Psoas muscle (tissue), 8 donors: ENCODE measurements at regions of chr2 and their contacts with region 1.

Region 1: GRCh38 chr2:163345908-163346573 is 389.8 kb downstream of the FIGN start:
- DNase-seq: no peak
- ATAC-seq: peak in 1 of 4 donors; percentile 34
- H3K4me3 ChIP-seq: no peak overlapping the region
- H3K27ac ChIP-seq: no peak overlapping the region
- H3K4me1 ChIP-seq: peaks cover 2% of the 10 kb centered on the region
- H3K27me3 ChIP-seq: no peaks in the 10 kb centered on the region
- CTCF ChIP-seq: peak; percentile 83

Region 2: DNA sequence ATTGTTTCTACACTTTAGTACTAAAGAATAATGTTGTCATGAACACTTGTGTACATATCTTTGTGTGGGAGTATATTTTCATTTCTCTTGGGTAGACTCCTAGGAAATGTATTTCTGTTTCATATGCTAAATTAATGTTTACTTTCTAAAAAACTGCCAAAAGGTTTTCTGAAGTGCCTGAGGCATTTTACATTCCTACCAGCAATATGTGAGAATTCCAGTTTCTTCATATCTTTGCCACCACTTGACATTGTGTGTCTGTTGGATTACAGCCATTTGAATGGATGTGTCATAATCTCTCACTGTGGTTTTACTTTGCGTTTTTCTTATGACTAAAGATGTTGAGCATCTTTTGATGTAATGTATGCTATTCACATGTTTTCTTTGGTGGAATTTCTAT is 79.3 kb before region 1 on chr2:
- intact Hi-C with region 1: no loop called
- DNase-seq: no peak
- ATAC-seq: no peak
- H3K4me3 ChIP-seq: no peak overlapping the region
- H3K27ac ChIP-seq: no peak overlapping the region
- H3K4me1 ChIP-seq: no peaks in the 10 kb centered on the region
- H3K27me3 ChIP-seq: no peaks in the 10 kb centered on the region
- CTCF ChIP-seq: no peak

Region 3: DNA sequence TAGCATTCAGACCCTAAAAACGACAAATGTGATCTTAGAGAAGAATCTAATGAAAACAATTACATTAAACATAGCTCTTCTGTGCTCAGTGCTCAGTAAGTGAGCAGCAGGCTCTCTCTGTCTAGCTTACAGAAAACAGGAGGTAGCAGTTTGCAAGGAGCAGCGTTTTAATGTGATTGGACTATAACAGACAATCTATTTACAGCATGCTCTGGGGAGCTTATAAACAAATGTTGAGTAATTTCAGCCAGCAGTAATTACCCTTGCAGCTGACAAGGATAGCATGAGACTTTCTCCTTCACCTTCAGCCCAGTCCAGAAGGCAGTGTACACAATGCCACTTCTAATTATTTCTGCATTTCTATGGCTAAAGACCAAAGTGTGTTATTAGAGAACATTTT is 119.4 kb after region 1 on chr2:
- intact Hi-C with region 1: loop called in 1 of 2 experiments (anchors 10 kb)
- DNase-seq: no peak
- ATAC-seq: peak; percentile 63 to 93 (median 88)
- H3K4me3 ChIP-seq: no peak overlapping the region
- H3K27ac ChIP-seq: peak overlapping the region; percentile 61
- H3K4me1 ChIP-seq: peaks cover 8% of the 10 kb centered on the region
- H3K27me3 ChIP-seq: no peaks in the 10 kb centered on the region
- CTCF ChIP-seq: no peak

Region 4: DNA sequence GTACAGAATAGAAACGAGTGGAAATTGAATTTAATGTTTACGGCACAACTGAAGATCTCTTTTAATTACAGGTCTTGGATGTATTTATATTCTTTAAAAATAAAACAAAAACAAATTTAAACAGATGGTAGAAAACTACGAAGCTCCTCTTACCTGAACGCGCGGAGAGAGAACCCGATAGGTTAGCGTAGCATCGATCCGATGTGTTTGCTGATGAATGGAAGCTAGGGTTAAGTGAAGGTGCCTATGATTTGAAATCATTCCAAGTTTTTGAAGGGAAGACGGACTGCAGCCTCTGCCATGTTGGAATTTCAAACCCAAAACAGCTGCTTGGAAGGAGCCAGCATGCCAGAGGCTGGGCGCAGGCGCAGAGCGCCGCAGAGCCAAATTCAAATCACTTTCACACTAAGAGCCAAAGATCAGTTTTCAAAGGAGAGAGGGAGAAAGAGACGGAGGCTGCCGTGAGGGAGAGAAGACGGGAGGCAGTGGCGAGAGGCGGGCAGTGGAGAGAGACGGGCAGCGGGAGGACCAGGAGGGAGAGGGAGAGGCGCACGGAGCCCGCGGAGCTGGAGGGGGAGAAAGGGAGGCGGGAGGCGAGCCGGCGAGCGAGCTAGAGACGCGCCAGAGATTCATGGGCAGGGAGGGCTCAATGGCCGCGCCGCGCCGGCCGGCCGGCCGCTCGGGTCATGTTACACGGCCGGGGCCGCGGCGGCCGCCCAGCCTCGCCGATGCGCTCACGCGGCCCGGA is 389.8 kb after region 1 on chr2 and contains the start of gene FIGN:
- intact Hi-C with region 1: loop called in 1 of 2 experiments (anchors 5 kb)
- DNase-seq: peak; percentile 85 to 91
- ATAC-seq: peak; percentile 87 to 90 (median 88)
- H3K4me3 ChIP-seq: peak within 1 kb of the TSS; percentile 82
- H3K27ac ChIP-seq: peak within 1 kb of the TSS; percentile 96
- H3K4me1 ChIP-seq: peaks cover 3% of the 10 kb centered on the region
- H3K27me3 ChIP-seq: no peaks in the 10 kb centered on the region
- CTCF ChIP-seq: no peak
- total RNA-seq, gene FIGN: 1.2 to 3.0 (median 1.8) TPM

Region 5: DNA sequence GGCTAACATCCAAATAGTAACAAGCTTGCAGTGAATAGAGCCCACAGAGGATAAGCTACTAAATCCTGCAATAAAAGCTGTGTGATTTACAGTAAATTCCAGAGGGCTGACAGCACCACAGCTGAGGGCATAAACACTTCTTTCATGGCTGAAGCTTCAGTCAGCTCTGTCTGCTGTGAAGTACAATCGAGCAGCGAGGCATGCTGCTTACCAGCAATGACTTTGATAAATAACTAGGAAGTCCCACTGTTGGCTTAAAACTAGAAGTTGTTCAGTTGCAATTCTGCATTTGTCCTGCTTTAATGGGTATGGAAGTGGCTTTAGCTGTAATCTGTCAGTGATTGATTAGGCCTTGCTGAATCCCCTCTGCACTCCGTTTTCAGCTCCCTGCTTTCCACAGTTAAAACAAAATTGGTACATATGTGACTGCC is 454.9 kb after region 1 on chr2:
- intact Hi-C with region 1: no loop called
- DNase-seq: no peak
- ATAC-seq: peak in 2 of 4 donors; percentile 37 to 68
- H3K4me3 ChIP-seq: peak overlapping the region; percentile 0
- H3K27ac ChIP-seq: peak overlapping the region; percentile 3
- H3K4me1 ChIP-seq: peaks cover 21% of the 10 kb centered on the region
- H3K27me3 ChIP-seq: no peaks in the 10 kb centered on the region
- CTCF ChIP-seq: no peak

Region 6: GRCh38 chr2:164061129-164061746 is 715.2 kb after region 1 on chr2:
- intact Hi-C with region 1: loop called (anchors 5 to 10 kb)
- DNase-seq: no peak
- ATAC-seq: peak in 3 of 4 donors; percentile 23 to 49 (median 36)
- H3K4me3 ChIP-seq: no peak overlapping the region
- H3K27ac ChIP-seq: no peak overlapping the region
- H3K4me1 ChIP-seq: no peaks in the 10 kb centered on the region
- H3K27me3 ChIP-seq: no peaks in the 10 kb centered on the region
- CTCF ChIP-seq: peak; percentile 56

Region 7: GRCh38 chr2:164430166-164430783 is 1084.2 kb after region 1 on chr2:
- intact Hi-C with region 1: loop called in 1 of 2 experiments (anchors 5 kb)
- DNase-seq: no peak
- ATAC-seq: peak in 1 of 4 donors; percentile 46
- H3K4me3 ChIP-seq: no peak overlapping the region
- H3K27ac ChIP-seq: no peak overlapping the region
- H3K4me1 ChIP-seq: no peaks in the 10 kb centered on the region
- H3K27me3 ChIP-seq: no peaks in the 10 kb centered on the region
- CTCF ChIP-seq: peak; percentile 51